ENCODE measurements at regions of chr1 and their contacts with region 1.

Region 1: DNA sequence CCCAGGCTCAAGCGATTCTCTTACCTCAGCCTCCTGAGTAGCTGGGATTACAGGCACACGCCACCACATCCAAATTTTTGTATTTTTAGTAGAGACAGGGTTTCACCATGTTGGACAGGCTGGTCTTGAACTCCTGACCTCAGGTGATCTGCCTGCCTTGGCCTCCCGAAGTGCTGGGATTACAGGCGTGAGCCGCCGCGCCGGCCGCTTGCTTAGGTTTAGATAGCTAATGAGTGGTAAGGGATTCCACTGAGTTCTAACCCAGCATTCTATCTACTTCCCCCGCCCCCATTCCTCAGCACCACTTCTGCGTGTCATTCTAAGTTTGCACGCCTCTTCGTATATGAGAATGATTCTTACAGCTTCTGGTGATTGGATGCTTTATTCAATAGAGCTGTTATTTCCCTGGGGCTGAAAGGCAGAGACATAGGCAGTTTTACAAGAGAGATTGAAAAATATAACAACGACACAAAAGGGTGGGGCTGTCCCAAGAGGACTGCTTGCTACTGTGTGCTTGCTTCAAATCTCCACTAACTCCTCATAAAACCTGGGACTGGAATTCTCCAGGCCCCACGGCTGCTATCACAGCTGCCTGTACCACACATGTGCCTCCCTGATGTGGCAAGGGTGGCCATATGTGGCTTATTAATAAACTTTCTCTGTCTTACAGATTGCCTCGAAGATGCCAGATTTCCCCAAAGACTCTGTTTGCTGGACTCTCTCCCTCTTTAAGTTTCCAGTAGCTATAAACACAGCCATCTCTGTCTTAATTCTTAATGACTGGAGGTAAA is 23.7 kb upstream of the GREM2 start:
- DNase-seq: no peak
- H3K4me3 ChIP-seq: no peak overlapping the region
- H3K27ac ChIP-seq: no peak overlapping the region
- H3K4me1 ChIP-seq: no peaks in the 10 kb centered on the region
- H3K27me3 ChIP-seq: no peaks in the 10 kb centered on the region
- CTCF ChIP-seq: no peak

Region 2: GRCh38 chr1:240649733-240650660 is 14.3 kb after region 1 on chr1:
- intact Hi-C with region 1: loop called (anchors 2 kb)
- DNase-seq: no peak
- H3K4me3 ChIP-seq: no peak overlapping the region
- H3K27ac ChIP-seq: no peak overlapping the region
- H3K4me1 ChIP-seq: no peaks in the 10 kb centered on the region
- H3K27me3 ChIP-seq: no peaks in the 10 kb centered on the region
- CTCF ChIP-seq: no peak